Activated CD4-positive, alpha-beta memory T cell treated with anti-CD3 and anti-CD28 coated beads for 36 hours (primary cell): ENCODE measurements at regions of chr1 and their contacts with region 1.

Region 1: GRCh38 chr1:27445177-27445936 is 44.6 kb downstream of the WASF2 start:
- DNase-seq: no peak
- H3K4me3 Mint-ChIP-seq: peak overlapping the region; percentile 52
- H3K27ac Mint-ChIP-seq: peak overlapping the region; percentile 88
- H3K4me1 Mint-ChIP-seq: peaks cover 54% of the 10 kb centered on the region
- H3K27me3 Mint-ChIP-seq: no peaks in the 10 kb centered on the region

Region 2: DNA sequence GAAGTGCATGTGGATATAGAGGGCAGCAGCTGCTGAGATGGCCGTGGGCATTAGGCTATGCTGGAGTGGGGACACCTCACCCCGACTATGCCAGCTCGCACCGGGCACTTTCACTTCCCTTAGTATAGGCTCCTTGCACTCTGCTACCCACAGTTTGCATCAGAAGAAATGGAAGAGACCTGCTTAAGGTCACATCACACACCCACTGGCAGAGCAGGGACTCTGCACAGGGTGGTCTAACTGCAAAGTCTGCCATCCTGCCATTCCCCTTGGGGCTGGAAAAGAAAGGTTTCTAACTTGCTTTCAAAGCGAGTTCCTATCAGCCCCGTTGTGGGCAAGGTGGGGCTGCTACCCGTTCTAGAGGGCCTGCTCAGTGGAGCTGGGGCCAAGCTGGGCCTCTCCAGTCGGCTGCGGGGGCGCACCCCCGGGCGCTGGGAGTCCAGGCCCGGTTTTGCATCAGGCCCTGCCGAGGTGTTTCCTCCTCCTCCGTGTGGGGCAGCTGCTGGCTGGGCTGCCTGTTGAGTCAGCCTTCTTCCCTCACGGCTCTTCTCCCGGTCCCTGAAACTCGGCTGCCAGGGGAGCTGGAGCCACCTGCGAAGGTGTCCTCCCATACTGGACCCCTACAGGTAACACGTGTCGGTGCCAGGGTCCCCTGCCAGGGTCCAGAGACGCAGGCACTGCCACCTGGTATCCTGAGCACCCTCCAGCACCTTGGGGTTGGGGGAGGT is 103.7 kb before region 1 on chr1 and contains the start of gene SYTL1:
- CTCF ChIA-PET with region 1: no interaction called
- POLR2A ChIA-PET with region 1: no interaction called
- intact Hi-C with region 1: no loop called
- DNase-seq: peak; percentile 80
- H3K4me3 Mint-ChIP-seq: peak within 1 kb of the TSS; percentile 84
- H3K27ac Mint-ChIP-seq: peak within 1 kb of the TSS; percentile 92
- H3K4me1 Mint-ChIP-seq: peaks cover 51% of the 10 kb centered on the region
- H3K27me3 Mint-ChIP-seq: no peaks in the 10 kb centered on the region
- total RNA-seq, gene SYTL1: 27.3 to 30.4 TPM

Region 3: GRCh38 chr1:27408151-27408550 is 37.2 kb before region 1 on chr1:
- CTCF ChIA-PET with region 1: no interaction called
- POLR2A ChIA-PET with region 1: no interaction called
- intact Hi-C with region 1: no loop called
- DNase-seq: no peak
- H3K4me3 Mint-ChIP-seq: no peak overlapping the region
- H3K27ac Mint-ChIP-seq: no peak overlapping the region
- H3K4me1 Mint-ChIP-seq: peaks cover 3% of the 10 kb centered on the region
- H3K27me3 Mint-ChIP-seq: no peaks in the 10 kb centered on the region

Region 4: GRCh38 chr1:27481994-27482620 is 36.8 kb after region 1 on chr1:
- CTCF ChIA-PET with region 1: interaction called, 4 read pairs
- POLR2A ChIA-PET with region 1: interaction called, 11 read pairs
- intact Hi-C with region 1: loop called (anchors 1 kb)
- DNase-seq: no peak
- H3K4me3 Mint-ChIP-seq: no peak overlapping the region
- H3K27ac Mint-ChIP-seq: peak overlapping the region; percentile 76
- H3K4me1 Mint-ChIP-seq: peaks cover 52% of the 10 kb centered on the region
- H3K27me3 Mint-ChIP-seq: no peaks in the 10 kb centered on the region

Region 5: GRCh38 chr1:27489910-27490741 is 44.8 kb after region 1 on chr1 and contains the start of gene WASF2:
- CTCF ChIA-PET with region 1: interaction called, 8 read pairs
- POLR2A ChIA-PET with region 1: interaction called, 5 read pairs
- intact Hi-C with region 1: loop called (anchors 1 kb)
- DNase-seq: peak; percentile 98
- H3K4me3 Mint-ChIP-seq: peak within 1 kb of the TSS; percentile 96
- H3K27ac Mint-ChIP-seq: peak within 1 kb of the TSS; percentile 99
- H3K4me1 Mint-ChIP-seq: peaks cover 28% of the 10 kb centered on the region
- H3K27me3 Mint-ChIP-seq: no peaks in the 10 kb centered on the region
- total RNA-seq, gene WASF2: 109 to 110 TPM